Posterior vena cava (tissue), 2 donors: ENCODE measurements at regions of chr20 and their contacts with region 1.

Region 1: DNA sequence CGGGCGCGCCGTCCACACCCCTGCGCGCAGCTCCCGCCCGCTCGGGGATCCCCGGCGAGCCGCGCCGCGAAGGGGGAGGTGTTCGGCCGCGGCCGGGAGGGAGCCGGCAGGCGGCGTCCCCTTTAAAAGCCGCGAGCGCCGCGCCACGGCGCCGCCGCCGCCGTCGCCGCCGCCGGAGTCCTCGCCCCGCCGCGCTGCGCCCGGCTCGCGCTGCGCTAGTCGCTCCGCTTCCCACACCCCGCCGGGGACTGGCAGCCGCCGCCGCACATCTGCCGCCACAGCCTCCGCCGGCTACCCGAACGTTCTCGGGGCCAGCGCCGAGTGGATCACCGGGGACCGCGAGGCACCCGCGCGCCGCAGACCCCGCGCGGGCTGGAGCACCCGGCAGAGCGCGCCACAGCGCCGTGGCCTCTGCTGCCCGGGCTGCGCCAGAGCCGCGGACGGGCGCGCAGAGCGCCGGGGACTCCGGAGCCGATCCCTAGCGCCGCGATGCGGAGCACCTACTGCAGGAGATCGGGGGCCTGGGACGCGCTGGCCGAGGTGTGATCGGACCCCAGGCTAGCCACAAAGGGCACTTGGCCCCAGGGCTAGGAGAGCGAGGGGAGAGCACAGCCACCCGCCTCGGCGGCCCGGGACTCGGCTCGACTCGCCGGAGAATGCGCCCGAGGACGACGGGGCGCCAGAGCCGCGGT is at the start of gene BMP2:
- DNase-seq: peak; percentile 83
- total RNA-seq, gene BMP2: 3.2 to 5.3 TPM

Region 2: DNA sequence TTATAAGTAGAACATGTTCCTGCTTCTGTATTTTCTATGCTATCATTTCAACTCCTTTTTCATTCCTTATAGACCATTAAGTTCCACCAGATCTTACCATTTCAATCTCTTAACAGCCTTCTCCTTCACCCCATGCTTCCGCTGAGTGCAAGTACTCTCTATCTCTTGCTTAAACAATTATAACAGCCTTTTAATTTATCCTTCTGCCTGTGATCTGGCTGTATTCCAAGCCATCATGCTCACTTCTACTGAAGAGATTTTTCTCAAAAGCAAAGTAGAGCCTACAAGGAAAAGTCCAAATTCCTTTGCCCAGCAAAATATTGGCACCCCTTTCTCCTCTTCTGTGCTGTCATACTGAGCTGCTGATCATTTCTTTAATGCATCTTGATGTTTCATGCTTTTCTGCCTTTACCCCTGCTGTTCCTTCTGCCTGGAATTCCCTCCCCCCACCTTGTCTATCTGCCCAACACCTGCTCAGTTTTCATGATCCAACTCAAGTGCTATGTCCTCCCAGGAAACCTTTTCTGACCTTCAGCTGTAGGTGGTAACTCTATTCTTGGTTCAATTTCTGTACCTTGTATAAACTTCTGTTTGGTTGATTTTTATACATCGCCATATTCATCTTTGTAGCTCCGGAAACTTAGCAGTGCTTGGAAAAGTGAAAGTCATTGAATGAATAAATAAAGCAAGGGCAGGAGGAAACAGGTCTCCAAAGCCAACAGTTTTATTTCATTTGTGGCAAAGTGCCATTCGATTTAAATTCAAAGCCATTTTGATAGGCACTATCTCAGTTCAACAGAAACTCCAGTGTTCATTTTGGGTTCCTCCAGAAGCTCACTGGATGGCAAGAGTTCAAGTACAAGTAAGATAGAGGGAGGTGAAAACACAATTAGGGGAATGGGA is 10.7 kb before region 1 on chr20:
- intact Hi-C with region 1: no loop called
- DNase-seq: no peak

Region 3: GRCh38 chr20:7031222-7031621 is 263.5 kb after region 1 on chr20:
- intact Hi-C with region 1: no loop called
- DNase-seq: no peak

Region 4: DNA sequence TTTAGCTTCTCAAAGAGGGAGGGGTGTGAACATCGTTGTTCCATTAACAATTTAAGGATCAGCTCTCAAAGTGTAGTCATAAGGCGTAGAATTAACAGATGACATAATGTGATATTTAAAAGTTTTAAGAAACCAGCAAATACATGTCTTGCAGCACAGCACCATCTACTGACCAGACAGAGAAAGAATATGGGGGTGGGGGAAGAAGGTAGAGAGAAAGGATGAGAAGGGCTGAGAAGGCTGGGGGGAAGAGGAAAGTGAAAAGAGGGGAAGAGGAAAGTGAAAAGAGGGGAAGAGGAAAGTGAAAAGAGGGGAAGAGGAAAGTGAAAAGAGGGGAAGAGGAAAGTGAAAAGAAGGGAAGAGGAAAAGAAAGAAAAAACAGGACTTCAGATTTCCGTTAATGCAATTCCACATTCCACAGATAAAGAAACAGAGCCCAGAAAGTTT is 1091.7 kb after region 1 on chr20:
- intact Hi-C with region 1: loop called in 1 of 2 experiments (anchors 5 kb)
- DNase-seq: no peak

Region 5: DNA sequence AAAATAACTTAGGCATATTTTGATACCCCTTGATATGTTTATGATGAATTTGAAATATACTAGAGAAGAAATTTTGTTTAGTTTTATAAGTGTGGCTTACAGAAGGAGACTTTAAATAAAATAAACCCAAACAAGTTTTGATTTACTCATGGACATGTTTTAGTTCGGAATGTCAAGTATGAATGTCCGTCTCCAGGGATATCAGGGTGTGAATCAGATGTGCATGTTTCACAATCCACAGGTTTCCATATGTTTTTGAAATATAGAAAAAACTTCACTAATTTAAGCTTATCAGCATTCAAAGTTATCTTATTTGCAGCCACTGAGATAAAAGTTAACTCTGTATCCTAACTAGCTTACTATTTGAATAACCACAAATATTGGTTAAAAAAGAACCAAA is 1415.8 kb after region 1 on chr20:
- intact Hi-C with region 1: loop called in 1 of 2 experiments (anchors 5 kb)
- DNase-seq: no peak